ENCODE measurements at regions of chr17 and their contacts with region 1.

Region 1: DNA sequence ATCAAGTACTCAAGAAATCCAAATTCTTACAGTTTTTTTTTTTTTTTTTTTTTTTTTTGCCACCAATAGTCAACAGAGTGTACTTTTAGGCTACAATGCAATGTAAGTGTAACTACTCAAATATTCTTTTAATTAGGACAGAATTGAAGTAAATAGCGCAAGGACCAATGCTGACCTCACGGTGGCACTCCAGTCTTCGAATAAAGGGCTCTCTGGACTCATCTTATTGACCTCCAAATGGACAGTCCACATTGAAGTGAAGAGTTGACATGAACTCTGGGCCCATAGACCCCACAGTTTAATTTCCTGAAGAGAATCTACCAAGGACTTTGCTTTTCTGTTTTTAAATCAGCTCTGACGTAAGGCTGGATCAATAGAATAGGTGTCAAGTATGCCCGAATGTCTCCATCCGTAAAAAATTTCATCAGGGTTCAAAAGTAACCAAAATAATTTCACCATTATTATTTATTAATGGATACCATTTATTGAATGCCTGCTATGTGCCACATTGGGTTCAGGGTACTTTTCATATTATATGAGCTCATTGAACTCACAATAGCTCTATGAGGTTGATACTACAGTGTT is 7.3 kb upstream of the DDX52 start:
- DNase-seq: no peak
- ATAC-seq: peak; percentile 68; the same call in 1 of the 2 replicates
- H3K4me3 ChIP-seq: no peak overlapping the region
- H3K27ac ChIP-seq: no peak overlapping the region
- H3K4me1 ChIP-seq: no peaks in the 10 kb centered on the region
- H3K27me3 ChIP-seq: no peaks in the 10 kb centered on the region; the same call in 1 of the 2 replicates
- CTCF ChIP-seq: peak; percentile 52

Region 2: DNA sequence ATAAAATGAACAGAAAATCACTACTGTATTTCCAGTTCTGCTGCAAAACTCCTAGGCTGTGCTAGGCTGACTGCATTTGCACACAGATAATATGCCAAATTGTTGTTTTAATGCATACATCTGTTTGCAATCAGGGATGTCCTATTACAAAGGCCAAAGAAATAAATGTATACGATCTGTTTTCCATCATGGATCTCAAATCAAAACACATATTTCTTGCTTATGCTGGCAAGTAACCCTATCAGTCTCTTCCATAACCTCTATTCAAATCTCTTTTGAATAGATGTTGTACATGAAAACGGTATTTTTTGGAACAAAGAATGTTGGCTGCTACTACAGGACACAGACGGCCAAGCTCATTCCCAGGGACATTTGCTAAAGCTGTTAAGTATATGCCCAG is 104.2 kb before region 1 on chr17:
- CTCF ChIA-PET with region 1: no interaction called
- POLR2A ChIA-PET with region 1: no interaction called
- in situ Hi-C with region 1: no loop called
- intact Hi-C with region 1: no loop called
- DNase-seq: no peak
- ATAC-seq: no peak
- H3K4me3 ChIP-seq: no peak overlapping the region
- H3K27ac ChIP-seq: no peak overlapping the region
- H3K4me1 ChIP-seq: no peaks in the 10 kb centered on the region
- H3K27me3 ChIP-seq: no peaks in the 10 kb centered on the region
- CTCF ChIP-seq: no peak

Region 3: DNA sequence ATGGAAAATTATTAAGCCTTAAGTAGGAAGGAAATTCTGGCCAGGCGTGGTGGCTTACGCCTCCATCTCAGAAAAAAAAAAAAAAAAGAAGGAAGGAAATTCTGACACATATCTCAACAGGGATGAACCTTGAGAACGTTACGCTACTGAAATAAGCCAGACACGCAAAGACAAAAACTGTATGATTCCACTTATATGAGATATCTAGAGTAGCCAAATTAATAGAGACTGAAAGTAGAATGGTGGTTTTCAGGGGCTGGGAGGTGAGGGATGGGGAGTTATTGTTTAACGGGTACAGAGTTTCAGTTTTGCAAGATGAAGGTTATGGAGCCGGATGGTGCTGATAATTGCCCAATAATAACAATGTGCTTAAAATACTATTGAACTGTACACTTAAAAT is 110.5 kb after region 1 on chr17:
- CTCF ChIA-PET with region 1: interaction called, 13 read pairs
- POLR2A ChIA-PET with region 1: no interaction called
- in situ Hi-C with region 1: no loop called
- intact Hi-C with region 1: no loop called
- DNase-seq: no peak
- ATAC-seq: no peak
- H3K4me3 ChIP-seq: no peak overlapping the region
- H3K27ac ChIP-seq: no peak overlapping the region
- H3K4me1 ChIP-seq: no peaks in the 10 kb centered on the region
- H3K27me3 ChIP-seq: peaks cover 2% of the 10 kb centered on the region; the same call in 1 of the 2 replicates
- CTCF ChIP-seq: no peak

Region 4: GRCh38 chr17:37770631-37771518 is 120.4 kb after region 1 on chr17:
- CTCF ChIA-PET with region 1: interaction called, 11 read pairs
- POLR2A ChIA-PET with region 1: no interaction called
- in situ Hi-C with region 1: no loop called
- intact Hi-C with region 1: loop called (anchors 10 kb)
- DNase-seq: peak; percentile 30
- ATAC-seq: peak; percentile 60; the same call in 1 of the 2 replicates
- H3K4me3 ChIP-seq: no peak overlapping the region
- H3K27ac ChIP-seq: no peak overlapping the region
- H3K4me1 ChIP-seq: no peaks in the 10 kb centered on the region
- H3K27me3 ChIP-seq: no peaks in the 10 kb centered on the region
- CTCF ChIP-seq: peak; percentile 72

Region 5: DNA sequence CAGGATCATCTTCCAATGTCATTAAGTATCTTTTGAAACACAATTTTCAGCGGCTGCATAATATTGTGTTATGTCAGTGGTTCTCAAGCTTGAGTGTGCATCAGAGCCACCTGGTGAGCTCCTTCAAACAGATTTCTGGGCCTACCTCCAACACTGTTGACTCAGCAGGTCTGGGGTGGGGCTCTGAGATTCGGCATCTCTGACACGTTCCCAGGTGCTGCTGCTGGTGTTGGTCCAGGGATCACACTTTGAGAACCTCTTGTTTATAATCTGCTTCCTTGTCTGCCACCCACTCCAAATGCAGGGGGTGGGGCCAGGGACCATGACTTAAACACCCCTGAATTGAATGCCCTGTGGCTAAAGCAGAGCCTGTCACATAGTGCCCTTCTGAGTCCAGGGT is 168.2 kb after region 1 on chr17:
- CTCF ChIA-PET with region 1: interaction called, 19 read pairs
- POLR2A ChIA-PET with region 1: no interaction called
- in situ Hi-C with region 1: no loop called
- intact Hi-C with region 1: loop called (anchors 5 kb)
- DNase-seq: no peak
- ATAC-seq: no peak
- H3K4me3 ChIP-seq: no peak overlapping the region
- H3K27ac ChIP-seq: no peak overlapping the region
- H3K4me1 ChIP-seq: no peaks in the 10 kb centered on the region
- H3K27me3 ChIP-seq: no peaks in the 10 kb centered on the region
- CTCF ChIP-seq: no peak

Region 6: DNA sequence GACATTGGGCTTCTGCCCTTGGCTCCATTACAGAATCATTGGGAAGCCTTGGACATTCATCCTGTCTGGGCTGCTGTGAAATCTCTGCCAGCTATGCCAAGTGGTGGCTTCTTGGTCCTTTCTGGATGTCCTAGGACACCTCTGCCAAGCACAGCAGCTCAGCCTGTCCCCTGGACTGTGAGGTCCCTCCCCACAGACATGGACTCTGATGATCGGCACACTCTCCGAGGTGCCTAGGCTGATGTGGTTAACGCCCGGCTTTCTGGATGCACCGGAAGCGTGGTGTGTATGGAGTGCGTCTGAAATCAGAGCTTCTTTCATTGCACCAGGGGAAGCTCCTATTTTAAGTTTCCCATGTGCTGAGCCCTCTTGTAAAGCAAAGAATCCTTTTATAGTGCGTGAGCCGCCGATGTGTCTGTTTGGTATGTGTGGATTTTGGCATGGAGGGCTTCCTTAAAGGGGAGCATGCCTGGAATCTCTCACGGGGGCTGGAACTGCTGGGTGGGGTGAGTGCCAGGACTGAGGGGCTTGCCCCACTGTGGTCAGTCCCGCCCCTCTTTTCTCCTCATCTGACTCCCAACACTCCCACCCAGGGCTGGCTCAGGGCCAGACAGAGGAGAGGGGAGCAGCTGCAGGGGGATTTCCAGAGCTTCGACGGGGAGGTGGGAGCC is 770.8 kb after region 1 on chr17:
- CTCF ChIA-PET with region 1: no interaction called
- POLR2A ChIA-PET with region 1: no interaction called
- in situ Hi-C with region 1: no loop called
- intact Hi-C with region 1: no loop called
- DNase-seq: no peak
- ATAC-seq: no peak
- H3K4me3 ChIP-seq: no peak overlapping the region
- H3K27ac ChIP-seq: no peak overlapping the region
- H3K4me1 ChIP-seq: no peaks in the 10 kb centered on the region; the same call in 1 of the 2 replicates
- H3K27me3 ChIP-seq: no peaks in the 10 kb centered on the region
- CTCF ChIP-seq: no peak

Measured in Panc1 (cell line).